ENCODE measurements at regions of chr11 and their contacts with region 1.

Region 1: DNA sequence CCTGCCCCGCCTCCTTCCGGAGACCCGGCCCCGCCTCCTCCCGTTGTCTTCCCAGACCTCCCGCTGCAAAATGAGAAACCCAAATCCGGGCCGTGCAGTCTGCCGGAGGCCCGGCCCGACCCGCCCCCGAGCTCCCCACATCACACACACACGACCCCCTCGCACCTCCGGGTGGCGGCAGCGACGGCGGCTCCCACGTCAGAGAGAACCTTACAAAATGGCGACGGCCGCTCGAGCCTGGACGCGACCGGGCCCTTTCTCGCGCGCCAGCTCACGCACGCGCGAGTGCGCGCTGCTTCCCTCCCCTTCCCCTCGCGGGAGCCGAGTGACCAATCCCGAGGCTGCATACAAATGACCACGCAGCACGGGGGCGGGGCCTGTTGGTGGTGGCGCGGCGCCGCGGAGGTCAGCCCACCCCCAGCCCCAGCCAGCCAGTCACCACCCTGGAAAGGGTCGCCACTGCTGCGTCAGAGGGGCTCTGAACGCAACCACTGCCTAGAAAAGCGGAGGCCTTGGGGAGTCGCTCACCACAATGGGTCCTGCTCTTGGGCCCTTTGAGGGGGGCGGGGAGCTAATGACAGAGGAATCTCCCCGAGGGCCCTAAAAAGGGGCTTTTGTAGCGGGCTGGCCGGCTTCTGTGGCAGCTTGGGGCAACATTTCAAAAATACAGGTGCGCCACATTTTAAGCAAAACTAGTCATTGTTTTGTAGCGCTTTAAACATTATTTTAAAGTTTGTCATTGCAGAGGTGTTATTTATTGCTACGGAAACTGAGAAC is at the start of gene RBM4B:
- DNase-seq: peak; percentile 96 to 98 (median 97)
- H3K4me3 ChIP-seq: peak within 1 kb of the TSS; percentile 55 to 98 (median 78)
- H3K27ac ChIP-seq: peak within 1 kb of the TSS; percentile 66 to 99 (median 94)
- H3K27me3 ChIP-seq: no peaks in the 10 kb centered on the region
- CTCF ChIP-seq: peak in 8 of 56 donors; percentile 5 to 39 (median 8)
- total RNA-seq, gene RBM4B: 17.3 to 45.2 (median 30.7) TPM

Region 2: DNA sequence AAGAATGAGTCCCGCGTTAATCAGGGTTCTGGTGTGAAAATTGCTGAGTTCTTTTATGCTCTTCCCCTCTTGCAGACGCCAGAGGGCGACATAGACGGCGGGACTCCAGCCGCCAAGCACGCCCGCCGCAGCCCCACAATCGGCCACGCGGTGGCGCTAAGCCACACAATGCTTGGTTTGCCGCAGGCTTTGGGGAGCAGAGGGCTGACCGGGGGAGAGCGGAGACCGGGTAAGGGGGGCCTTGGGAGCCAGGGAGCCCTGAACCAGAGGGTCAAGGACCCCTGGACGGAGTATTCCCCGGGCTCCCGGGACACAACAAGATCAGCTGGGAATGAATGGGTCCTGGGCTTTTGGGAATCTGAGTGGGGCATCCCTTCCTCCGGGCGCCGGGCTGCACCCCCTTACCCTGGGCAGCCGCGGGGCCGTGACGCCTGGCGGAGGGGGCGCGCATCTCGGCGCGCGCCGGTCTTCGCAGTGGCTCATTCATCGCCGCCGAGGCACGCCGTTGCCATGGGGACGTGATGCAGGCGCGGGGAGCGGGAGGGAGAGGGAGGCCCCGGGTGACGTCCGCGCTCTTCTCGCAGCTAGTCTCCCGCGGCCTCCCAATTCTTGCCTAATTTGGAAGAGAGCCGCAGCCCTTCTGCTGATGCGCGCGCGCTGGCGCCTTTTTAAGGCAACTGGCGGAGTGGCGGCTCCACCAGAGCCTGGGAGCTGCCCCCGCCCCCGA is 269.1 kb before region 1 on chr11:
- intact Hi-C with region 1: loop called in 1 of 2 experiments (anchors 2 kb)
- DNase-seq: peak; percentile 81 to 94 (median 90)
- H3K4me3 ChIP-seq: peak overlapping the region; percentile 38 to 75 (median 58)
- H3K27ac ChIP-seq: peak overlapping the region in 27 of 59 donors; percentile 14 to 90 (median 37)
- H3K27me3 ChIP-seq: peaks cover 0 to 6% (median 0%) of the 10 kb centered on the region in 45 donors
- CTCF ChIP-seq: peak; percentile 98 to 100 (median 100)

Region 3: DNA sequence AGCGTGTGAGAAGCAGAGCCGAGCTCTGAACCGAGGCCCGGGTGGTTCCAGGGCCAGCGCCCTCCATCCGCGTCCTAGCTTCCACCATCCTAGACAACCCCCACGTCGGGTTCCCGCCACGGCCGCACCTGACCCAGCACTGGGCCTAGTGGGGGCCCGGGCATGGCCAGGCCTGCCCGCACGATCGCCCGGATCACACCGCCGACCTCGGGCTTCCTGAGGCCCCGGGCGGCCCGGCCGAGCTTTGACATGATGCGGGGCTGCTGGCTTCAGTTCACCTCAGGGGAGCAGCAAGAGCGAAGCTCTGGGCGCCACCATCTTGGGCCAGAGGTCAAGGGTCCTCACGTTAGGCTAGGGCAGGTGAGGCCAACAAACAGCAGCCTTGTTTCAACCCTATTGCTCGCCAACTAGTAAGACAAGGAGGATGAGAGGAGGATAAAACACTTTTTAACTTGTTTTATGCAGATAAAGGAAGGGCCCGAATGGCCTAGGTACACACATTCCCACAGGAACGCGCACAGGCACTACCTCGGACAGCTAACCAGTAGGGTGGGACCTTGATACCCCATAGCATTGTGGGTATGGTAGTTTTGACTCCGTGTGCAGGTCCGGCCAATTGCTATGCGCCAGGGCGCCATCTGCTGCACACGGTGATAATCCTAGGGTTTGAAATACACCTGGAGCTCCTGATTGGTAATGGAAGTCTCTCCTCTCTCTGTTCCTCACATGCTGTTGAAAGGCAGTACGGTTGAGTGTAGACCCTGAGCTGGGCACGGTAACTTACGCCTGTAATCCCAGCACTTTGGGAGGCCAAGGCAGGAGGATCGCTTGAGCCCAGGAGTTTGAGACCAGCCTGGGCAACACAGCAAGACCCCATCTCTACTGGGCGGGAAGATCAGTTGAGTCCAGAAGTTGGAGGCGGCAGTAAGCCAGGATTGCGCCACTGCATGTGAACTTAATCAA is 239.0 kb before region 1 on chr11 and contains the start of gene MRPL11:
- intact Hi-C with region 1: loop called in 1 of 2 experiments (anchors 10 kb)
- DNase-seq: peak; percentile 83 to 94 (median 90)
- H3K4me3 ChIP-seq: peak within 1 kb of the TSS; percentile 67 to 99 (median 89)
- H3K27ac ChIP-seq: peak within 1 kb of the TSS; percentile 5 to 98 (median 91)
- H3K27me3 ChIP-seq: no peaks in the 10 kb centered on the region
- CTCF ChIP-seq: peak; percentile 68 to 95 (median 86)
- total RNA-seq, gene MRPL11: 10.0 to 26.4 (median 18.3) TPM

Region 4: DNA sequence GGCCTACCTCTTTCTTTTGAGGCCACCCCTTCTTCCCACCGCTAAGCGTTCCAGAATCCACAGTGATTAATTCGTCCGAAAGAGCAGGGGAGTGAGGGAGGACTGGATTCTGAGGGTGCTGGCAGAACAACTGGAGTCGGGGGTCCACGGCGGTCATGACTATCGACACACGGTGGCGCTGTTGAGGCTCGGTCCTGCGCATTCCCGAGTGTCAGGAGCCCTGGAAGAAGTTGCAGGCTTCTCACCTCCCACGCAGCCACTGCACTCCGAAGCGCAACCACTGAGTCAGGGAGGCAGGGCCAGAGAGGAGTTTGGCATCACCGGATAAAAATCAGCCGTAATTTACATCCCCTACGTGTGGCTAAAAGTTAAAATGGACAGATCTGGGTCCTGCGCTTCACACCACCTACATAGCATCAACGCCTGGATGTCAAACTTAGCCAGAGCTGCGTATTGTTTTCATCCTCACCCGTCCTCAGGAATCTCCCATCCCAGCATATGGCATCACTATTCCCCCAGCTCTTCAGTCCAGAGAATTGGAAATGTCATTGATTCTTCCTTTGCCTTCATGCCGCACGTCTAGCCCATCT is 98.7 kb before region 1 on chr11:
- intact Hi-C with region 1: loop called (anchors 1 to 5 kb)
- DNase-seq: peak; percentile 70 to 86 (median 80)
- H3K4me3 ChIP-seq: peak overlapping the region in 20 of 59 donors; percentile 1 to 39 (median 21)
- H3K27ac ChIP-seq: peak overlapping the region in 8 of 59 donors; percentile 0 to 74 (median 13)
- H3K27me3 ChIP-seq: no peaks in the 10 kb centered on the region
- CTCF ChIP-seq: peak; percentile 46 to 93 (median 84)

Region 5: GRCh38 chr11:66592457-66593302 is 85.1 kb before region 1 on chr11 and contains the starts of genes CCDC87 and CCS:
- intact Hi-C with region 1: loop called (anchors 5 kb)
- DNase-seq: peak; percentile 96 to 98 (median 97)
- H3K4me3 ChIP-seq: peak within 1 kb of the TSS; percentile 57 to 100 (median 80)
- H3K27ac ChIP-seq: peak within 1 kb of the TSS in 57 of 59 donors; percentile 39 to 94 (median 83)
- H3K27me3 ChIP-seq: no peaks in the 10 kb centered on the region
- CTCF ChIP-seq: peak; percentile 38 to 86 (median 68)
- total RNA-seq, gene CCDC87: 0.26 to 2.4 (median 1.2) TPM
- total RNA-seq, gene CCS: 27.0 to 66.5 (median 43.1) TPM

Region 6: GRCh38 chr11:66616379-66617154 is 61.2 kb before region 1 on chr11 and contains the start of gene RBM14:
- intact Hi-C with region 1: loop called in 1 of 2 experiments (anchors 2 kb)
- DNase-seq: peak; percentile 95 to 99 (median 98)
- H3K4me3 ChIP-seq: peak within 1 kb of the TSS; percentile 68 to 100 (median 93)
- H3K27ac ChIP-seq: peak within 1 kb of the TSS; percentile 79 to 99 (median 94)
- H3K27me3 ChIP-seq: no peaks in the 10 kb centered on the region
- CTCF ChIP-seq: peak in 8 of 56 donors; percentile 4 to 39 (median 22)
- total RNA-seq, gene RBM14: 62.9 to 242 (median 100) TPM

Region 7: DNA sequence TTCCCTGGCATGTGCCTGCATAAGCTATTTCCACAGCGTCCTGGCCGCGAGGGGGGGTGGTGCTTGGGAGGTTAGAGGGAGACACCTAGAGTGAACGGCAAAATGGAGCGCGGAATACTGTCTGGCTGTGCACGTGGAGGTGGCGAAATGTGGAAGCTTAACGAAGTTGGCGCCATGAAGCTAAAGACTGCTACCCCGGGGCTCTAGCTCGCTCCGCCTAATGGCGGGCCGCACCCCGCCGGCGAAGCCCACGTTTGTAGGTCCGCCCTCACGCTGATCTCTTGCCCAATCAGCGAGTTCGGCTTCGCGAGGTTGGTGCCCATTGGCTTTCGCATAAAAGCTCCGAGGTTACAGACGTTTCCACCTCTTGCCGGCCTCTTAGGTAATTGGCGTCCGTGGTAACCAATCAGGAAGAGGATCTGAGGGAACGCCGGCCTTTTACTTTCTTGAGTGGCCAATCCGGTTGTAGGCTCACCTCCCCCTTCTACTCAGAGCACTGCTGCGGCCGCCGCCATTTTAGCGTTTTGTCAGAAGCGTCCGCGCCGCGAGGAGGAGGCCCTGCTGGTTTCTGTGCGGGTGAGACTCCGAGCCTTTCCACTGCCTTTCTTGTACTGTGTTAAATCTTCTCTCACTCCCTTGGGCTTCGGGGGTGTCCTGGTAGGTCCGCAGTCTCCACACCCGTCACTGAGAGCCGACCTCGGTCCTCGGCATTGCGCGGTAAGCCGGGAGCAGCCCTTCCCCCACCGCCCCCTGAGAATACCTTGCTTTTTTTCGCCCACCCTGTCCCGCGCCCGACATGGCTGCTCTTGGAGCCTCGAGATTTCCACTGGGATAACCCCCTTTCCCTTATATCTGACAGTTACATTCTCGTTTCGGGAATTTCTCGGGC is 39.4 kb before region 1 on chr11 and contains the start of gene RBM4:
- intact Hi-C with region 1: loop called (anchors 2 to 5 kb)
- DNase-seq: peak; percentile 97 to 100 (median 99)
- H3K4me3 ChIP-seq: peak within 1 kb of the TSS; percentile 52 to 97 (median 81)
- H3K27ac ChIP-seq: peak within 1 kb of the TSS; percentile 52 to 97 (median 88)
- H3K27me3 ChIP-seq: no peaks in the 10 kb centered on the region
- CTCF ChIP-seq: peak in 32 of 56 donors; percentile 7 to 50 (median 24)
- total RNA-seq, gene RBM4: 72.2 to 164 (median 105) TPM

Region 8: DNA sequence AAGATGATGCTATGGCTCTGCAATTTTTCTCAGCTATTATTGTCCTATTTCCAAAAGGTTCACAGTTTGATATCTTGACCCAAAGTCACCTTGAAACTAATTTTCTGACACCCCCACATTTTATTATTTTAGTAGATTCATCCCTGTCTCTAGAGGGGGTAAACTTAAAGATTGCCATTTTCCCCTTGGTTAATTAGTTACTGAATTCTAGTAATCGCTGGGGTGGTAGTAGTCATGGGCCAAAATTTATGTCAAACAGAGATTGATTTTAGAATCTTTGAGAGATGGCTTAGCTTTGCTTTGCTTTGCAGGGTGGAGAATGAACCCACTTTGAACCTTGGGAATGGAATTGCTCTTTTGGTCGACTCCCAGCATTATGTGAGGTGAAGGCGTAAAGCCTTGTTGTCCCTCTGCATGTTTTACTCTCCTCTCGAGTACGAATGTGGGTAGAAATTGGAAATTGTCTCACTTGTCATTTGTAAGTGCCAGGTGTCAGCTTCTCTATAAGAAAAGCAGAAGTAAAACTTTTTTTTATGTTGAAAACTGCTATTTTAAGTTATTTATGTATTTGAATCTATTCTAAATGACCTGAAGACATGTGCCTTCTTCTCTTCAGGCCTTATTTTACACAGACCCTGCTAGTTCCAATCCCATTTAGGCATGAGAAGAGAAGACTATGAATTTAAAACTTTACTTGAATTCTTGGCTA is 123.1 kb after region 1 on chr11:
- intact Hi-C with region 1: no loop called
- DNase-seq: no peak
- H3K4me3 ChIP-seq: no peak overlapping the region
- H3K27ac ChIP-seq: no peak overlapping the region
- H3K27me3 ChIP-seq: no peaks in the 10 kb centered on the region
- CTCF ChIP-seq: no peak

Region 9: GRCh38 chr11:68398995-68399851 is 1721.4 kb after region 1 on chr11:
- intact Hi-C with region 1: no loop called
- DNase-seq: no peak
- H3K4me3 ChIP-seq: no peak overlapping the region
- H3K27ac ChIP-seq: peak overlapping the region in 5 of 59 donors; percentile 4 to 64 (median 18)
- H3K27me3 ChIP-seq: no peaks in the 10 kb centered on the region
- CTCF ChIP-seq: no peak

Measured in dorsolateral prefrontal cortex (tissue), 120 donors.